Esophagus squamous epithelium (tissue), 5 donors: ENCODE measurements at regions of chr3 and their contacts with region 1.

Region 1: GRCh38 chr3:133573054-133573628 is 345 bp upstream of the CDV3 start:
- DNase-seq: no peak
- H3K4me3 ChIP-seq: peak overlapping the region; percentile 85 to 90 (median 88)
- H3K27ac ChIP-seq: peak overlapping the region; percentile 96 to 99 (median 98)
- H3K4me1 ChIP-seq: peaks cover 23 to 83% (median 50%) of the 10 kb centered on the region in 3 donors
- H3K27me3 ChIP-seq: no peaks in the 10 kb centered on the region
- CTCF ChIP-seq: peak in 3 of 6 experiments; percentile 18 to 29 (median 23)
- POLR2A ChIP-seq: peak in 2 of 4 donors; percentile 50 to 68

Region 2: GRCh38 chr3:133457465-133458067 is 115.6 kb before region 1 on chr3:
- intact Hi-C with region 1: loop called (anchors 10 kb)
- DNase-seq: no peak
- H3K4me3 ChIP-seq: no peak overlapping the region
- H3K27ac ChIP-seq: no peak overlapping the region
- H3K4me1 ChIP-seq: peaks cover 0 to 52% (median 16%) of the 10 kb centered on the region in 3 donors
- H3K27me3 ChIP-seq: no peaks in the 10 kb centered on the region
- CTCF ChIP-seq: peak in 2 of 6 experiments; percentile 15 to 23
- POLR2A ChIP-seq: no peak